ENCODE measurements at regions of chr4 and their contacts with region 1.

Region 1: GRCh38 chr4:23135792-23136645 is 443.3 kb downstream of the GBA3 start:
- DNase-seq: peak in 5 of 9 donors; percentile 2 to 20 (median 18)
- ATAC-seq: no peak
- H3K4me3 ChIP-seq: no peak overlapping the region
- H3K4me3 Mint-ChIP-seq: no peak overlapping the region
- H3K27ac ChIP-seq: no peak overlapping the region
- H3K27ac Mint-ChIP-seq: no peak overlapping the region
- H3K4me1 ChIP-seq: no peaks in the 10 kb centered on the region
- H3K4me1 Mint-ChIP-seq: no peaks in the 10 kb centered on the region
- H3K27me3 ChIP-seq: no peaks in the 10 kb centered on the region
- H3K27me3 Mint-ChIP-seq: peaks cover 0 to 9% (median 0%) of the 10 kb centered on the region in 5 donors

Region 2: GRCh38 chr4:23614284-23614892 is 478.4 kb after region 1 on chr4:
- CTCF ChIA-PET with region 1: no interaction called
- POLR2A ChIA-PET with region 1: no interaction called
- intact Hi-C with region 1: loop called in 1 of 2 experiments (anchors 5 kb)
- DNase-seq: no peak
- ATAC-seq: no peak
- H3K4me3 ChIP-seq: no peak overlapping the region
- H3K4me3 Mint-ChIP-seq: no peak overlapping the region
- H3K27ac ChIP-seq: no peak overlapping the region
- H3K27ac Mint-ChIP-seq: no peak overlapping the region
- H3K4me1 ChIP-seq: no peaks in the 10 kb centered on the region
- H3K4me1 Mint-ChIP-seq: no peaks in the 10 kb centered on the region
- H3K27me3 ChIP-seq: no peaks in the 10 kb centered on the region
- H3K27me3 Mint-ChIP-seq: no peaks in the 10 kb centered on the region

Region 3: DNA sequence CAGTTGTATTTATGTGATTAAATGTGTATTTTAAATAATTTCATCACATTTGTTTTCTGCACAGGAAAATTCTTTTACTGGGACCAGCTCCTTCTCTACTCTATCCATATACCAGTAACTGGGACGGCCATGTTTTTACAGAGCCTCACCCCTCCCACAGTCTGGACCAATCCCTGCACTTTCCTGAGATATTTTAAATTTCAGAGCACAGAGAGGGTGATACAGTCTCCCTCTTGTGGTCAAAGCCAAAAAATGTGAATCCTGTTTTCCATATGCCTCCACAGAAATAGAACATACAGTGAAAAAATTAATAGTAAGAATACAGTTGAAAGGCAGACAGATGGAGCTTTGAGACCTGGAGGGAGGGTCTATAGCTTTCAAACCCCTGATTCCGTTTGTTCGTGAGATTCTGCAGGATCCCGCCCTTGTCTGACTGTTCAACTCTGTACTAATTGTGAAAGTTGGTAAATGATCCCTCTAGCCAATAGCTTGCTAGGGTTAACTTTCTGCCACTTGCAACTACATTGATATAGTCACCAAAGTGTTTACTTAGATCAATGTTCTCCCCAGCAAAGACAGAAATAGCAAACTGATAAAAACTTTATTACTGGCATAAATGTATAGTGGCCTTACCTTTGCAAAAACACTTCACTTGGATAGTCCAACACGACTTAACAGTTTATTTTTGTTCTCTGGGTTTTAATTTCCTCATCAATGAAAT is 581.7 kb after region 1 on chr4:
- CTCF ChIA-PET with region 1: no interaction called
- POLR2A ChIA-PET with region 1: no interaction called
- intact Hi-C with region 1: loop called in 1 of 2 experiments (anchors 2 kb)
- DNase-seq: no peak
- ATAC-seq: peak; percentile 24
- H3K4me3 ChIP-seq: no peak overlapping the region
- H3K4me3 Mint-ChIP-seq: no peak overlapping the region
- H3K27ac ChIP-seq: no peak overlapping the region
- H3K27ac Mint-ChIP-seq: no peak overlapping the region
- H3K4me1 ChIP-seq: no peaks in the 10 kb centered on the region
- H3K4me1 Mint-ChIP-seq: no peaks in the 10 kb centered on the region
- H3K27me3 ChIP-seq: no peaks in the 10 kb centered on the region
- H3K27me3 Mint-ChIP-seq: peaks cover 0 to 5% (median 0%) of the 10 kb centered on the region in 5 donors

Measured in naive thymus-derived CD4-positive, alpha-beta T cell (primary cell).